A549 (cell line): ENCODE measurements at regions of chr1 and their contacts with region 1.

Region 1: DNA sequence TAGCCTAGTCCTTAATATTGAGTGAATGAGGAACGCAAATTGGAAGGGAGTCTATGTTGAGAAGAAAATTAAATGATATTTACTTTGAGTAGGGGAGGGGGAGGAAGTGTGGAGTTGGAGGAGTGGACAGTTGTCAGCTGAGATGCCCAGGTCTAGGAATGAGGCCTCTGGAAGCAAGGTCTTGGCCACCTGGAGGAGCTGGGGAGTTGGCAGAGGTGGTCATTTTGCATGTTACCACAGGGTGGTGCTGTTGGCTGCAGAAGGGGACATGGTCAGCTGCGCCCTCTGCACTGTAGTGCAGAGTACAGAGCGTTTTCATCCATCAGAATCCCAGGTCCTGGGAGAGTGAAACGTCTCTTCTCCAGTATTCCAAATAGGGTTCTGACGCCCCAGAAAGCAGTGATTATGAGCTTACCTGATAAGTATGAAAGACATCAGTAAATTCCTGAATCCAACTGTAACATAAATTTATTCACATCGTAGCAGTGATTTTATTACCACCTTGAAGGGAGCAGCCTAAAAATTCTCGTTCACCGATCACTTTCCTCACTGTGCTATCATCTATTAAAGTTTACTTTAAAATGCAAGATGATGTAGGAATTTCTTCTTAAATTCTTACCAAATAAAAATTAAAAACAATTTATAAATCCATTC is 13.8 kb downstream of the PARK7 start:
- DNase-seq: peak; percentile 70 to 86
- ATAC-seq: peak; percentile 100
- H3K4me3 ChIP-seq: no peak overlapping the region
- H3K27ac ChIP-seq: peak overlapping the region in 1 of 2 experiments; percentile 31; a peak in 1 of 6 replicates
- H3K4me1 ChIP-seq: 0 out of 3 replicates have a peak, but pooled peaks cover 3% of the 10 kb centered on the region
- CTCF ChIP-seq: peak; percentile 89
- EP300 ChIP-seq: no peak
- POLR2A ChIP-seq: no peak
- RAD21 ChIP-seq: peak; percentile 87

Region 2: GRCh38 chr1:8004803-8005554 is 29.6 kb after region 1 on chr1:
- CTCF ChIA-PET with region 1: interaction called, 19 read pairs
- POLR2A ChIA-PET with region 1: interaction called, 5 read pairs
- DNase-seq: peak; percentile 66 to 95
- ATAC-seq: peak; percentile 81 to 91
- H3K4me3 ChIP-seq: peak overlapping the region; percentile 15; the same call in 1 of the 3 replicates
- H3K27ac ChIP-seq: peak overlapping the region; percentile 93 to 94
- H3K4me1 ChIP-seq: peaks cover 53% of the 10 kb centered on the region
- CTCF ChIP-seq: no peak
- EP300 ChIP-seq: peak; percentile 82 to 90; a peak in 4 of 5 replicates
- POLR2A ChIP-seq: no peak
- RAD21 ChIP-seq: peak in 1 of 2 experiments; percentile 31; a peak in 1 of 5 replicates

Region 3: DNA sequence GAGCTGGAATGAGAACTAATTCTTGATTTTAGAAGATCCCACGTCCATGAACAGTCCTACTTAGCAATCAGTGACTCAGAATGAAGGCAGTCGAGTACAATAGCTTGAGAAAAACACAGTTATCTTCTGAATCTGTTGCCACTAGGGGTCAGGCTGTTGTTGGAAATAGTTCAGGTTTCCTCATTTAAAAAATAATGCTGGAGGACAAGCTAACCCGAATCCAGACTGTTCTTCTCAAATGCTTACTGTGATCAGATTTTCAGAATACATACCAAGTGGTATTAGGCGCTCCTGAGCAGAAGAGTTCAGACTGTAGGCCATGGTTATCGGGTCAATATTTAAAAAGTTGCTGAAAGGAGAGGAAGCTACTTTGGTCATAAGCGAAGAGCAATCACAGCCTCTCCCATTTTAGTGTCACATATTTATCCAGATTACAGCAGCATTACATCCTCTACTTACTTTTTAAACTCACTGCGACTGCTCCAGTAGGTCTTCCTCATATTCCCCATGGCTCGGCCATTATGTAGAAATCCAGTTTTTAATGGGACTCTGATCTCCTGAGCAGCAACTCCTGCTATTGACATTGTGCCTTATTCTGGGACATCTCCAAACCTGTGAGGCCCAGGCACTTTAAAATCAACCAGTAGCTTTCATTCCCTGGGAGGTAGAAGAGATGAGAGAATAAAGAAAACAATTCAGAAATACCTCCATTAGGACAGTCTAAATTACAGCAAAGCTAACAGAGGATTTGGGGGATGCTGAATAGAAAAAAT is 39.9 kb after region 1 on chr1:
- CTCF ChIA-PET with region 1: interaction called, 86 read pairs
- POLR2A ChIA-PET with region 1: no interaction called
- DNase-seq: peak; percentile 22 to 72
- ATAC-seq: peak; percentile 41 to 45; a peak in 4 of 6 replicates
- H3K4me3 ChIP-seq: peak overlapping the region; percentile 26; the same call in 1 of the 3 replicates
- H3K27ac ChIP-seq: peak overlapping the region; percentile 68 to 82
- H3K4me1 ChIP-seq: peaks cover 100% of the 10 kb centered on the region
- CTCF ChIP-seq: peak; percentile 58
- EP300 ChIP-seq: no peak
- POLR2A ChIP-seq: no peak
- RAD21 ChIP-seq: peak; percentile 73 to 77

Region 4: GRCh38 chr1:8343464-8344001 is 368.2 kb after region 1 on chr1:
- CTCF ChIA-PET with region 1: interaction called, 76 read pairs
- POLR2A ChIA-PET with region 1: no interaction called
- DNase-seq: peak; percentile 58 to 89
- ATAC-seq: peak; percentile 84 to 87
- H3K4me3 ChIP-seq: no peak overlapping the region
- H3K27ac ChIP-seq: peak overlapping the region; percentile 94 to 95
- H3K4me1 ChIP-seq: peaks cover 28% of the 10 kb centered on the region
- CTCF ChIP-seq: no peak
- EP300 ChIP-seq: peak; percentile 57 to 71; a peak in 3 of 5 replicates
- POLR2A ChIP-seq: no peak
- RAD21 ChIP-seq: peak; percentile 4 to 37; a peak in 3 of 5 replicates